ENCODE measurements at regions of chr9 and their contacts with region 1.

Region 1: GRCh38 chr9:30774326-30774725 is 1610.1 kb upstream of the ACO1 start:
- DNase-seq: peak; percentile 80 to 87
- H3K4me3 ChIP-seq: no peak overlapping the region
- H3K27ac ChIP-seq: no peak overlapping the region
- H3K4me1 ChIP-seq: no peaks in the 10 kb centered on the region
- H3K27me3 ChIP-seq: no peaks in the 10 kb centered on the region
- CTCF ChIP-seq: peak; percentile 68 to 96 (median 87)
- EP300 ChIP-seq: 0 out of 3 replicates have a peak, but pooled peaks of 1 of the 2 experiments have one; percentile 9
- POLR2A ChIP-seq: no peak
- RAD21 ChIP-seq: peak; percentile 81 to 89

Region 2: DNA sequence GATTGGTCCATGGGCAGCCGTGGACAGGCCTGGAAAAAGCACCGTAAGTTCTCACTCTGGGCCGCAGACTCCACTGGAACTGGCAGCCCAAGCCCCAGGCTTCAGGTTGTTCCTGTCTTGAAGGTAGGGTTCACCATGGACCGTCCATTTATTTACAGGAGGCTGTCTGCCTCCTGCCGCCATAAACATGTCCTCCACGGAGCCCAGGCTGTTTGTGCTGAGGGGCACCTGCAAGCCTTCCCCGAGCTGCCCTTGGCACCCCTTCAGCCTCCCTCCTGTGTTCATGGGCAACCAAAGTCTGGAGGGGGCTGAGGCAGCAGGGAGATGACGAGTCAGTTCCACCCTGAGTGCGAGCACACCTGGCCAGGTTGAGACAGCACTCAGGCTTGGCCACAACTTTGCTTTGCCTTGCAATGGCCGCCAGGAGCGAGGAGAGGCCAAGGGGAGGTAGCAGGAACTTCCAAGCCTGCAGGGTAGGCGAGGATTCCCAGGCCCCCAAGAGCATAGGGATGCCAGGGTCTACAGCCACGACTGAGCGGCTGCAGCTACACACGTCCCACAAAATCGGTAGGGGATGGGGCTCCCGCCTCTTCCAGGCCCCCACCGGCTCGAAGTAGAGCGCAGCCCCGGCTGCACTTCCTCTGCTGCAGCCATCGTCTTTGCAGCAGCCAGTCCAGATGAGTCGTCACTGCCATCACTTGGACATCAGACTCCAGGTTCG is 15.4 kb before region 1 on chr9:
- CTCF ChIA-PET with region 1: interaction called, 12 read pairs
- POLR2A ChIA-PET with region 1: no interaction called
- DNase-seq: no peak
- H3K4me3 ChIP-seq: no peak overlapping the region
- H3K27ac ChIP-seq: no peak overlapping the region
- H3K4me1 ChIP-seq: peaks cover 0 to 7% (median 0%) of the 10 kb centered on the region in 4 experiments; a peak in 2 of 7 replicates
- H3K27me3 ChIP-seq: no peaks in the 10 kb centered on the region
- CTCF ChIP-seq: no peak
- EP300 ChIP-seq: no peak
- POLR2A ChIP-seq: no peak
- RAD21 ChIP-seq: no peak